Cardiac septum (tissue), 1 donor: ENCODE measurements at regions of chr9 and their contacts with region 1.

Region 1: GRCh38 chr9:130034570-130034969 is 8.4 kb downstream of the FNBP1 start:
- DNase-seq: no peak

Region 2: DNA sequence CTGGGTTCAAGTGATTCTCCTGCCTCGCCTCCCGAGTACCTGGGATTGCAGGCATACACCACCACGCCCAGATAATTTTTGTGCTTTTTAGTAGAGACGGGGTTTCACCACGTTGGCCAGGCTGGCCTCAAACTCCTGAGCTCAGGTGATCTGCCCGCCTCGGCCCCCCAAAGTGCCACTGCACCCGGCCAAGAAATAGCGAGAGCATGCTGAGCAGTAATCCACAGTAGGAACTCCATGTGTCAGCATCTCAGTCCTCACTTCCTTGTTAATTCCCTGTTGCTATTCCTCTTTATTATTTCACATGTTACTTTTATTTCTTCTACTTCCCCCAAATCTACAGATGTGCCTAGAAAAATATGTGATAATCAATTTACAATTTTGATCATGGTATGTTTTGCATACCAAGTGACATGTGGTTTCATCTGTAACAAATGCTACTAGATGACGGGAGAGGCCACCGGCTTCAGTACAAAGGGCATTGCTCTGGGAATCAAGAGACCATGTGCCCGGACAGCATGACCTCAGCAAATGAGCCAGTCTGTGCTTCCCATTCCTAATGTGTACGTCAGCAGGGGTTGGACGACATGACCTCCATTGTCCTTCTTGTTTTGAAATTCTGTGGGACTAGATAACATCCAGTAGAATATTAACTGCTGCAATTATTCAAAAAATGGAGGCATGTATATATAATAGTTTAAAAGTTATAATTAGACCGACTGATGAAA is 53.2 kb before region 1 on chr9:
- intact Hi-C with region 1: loop called (anchors 5 kb)
- DNase-seq: no peak

Region 3: GRCh38 chr9:130118841-130119518 is 84.4 kb after region 1 on chr9:
- intact Hi-C with region 1: no loop called
- DNase-seq: no peak